Mammary epithelial cell (primary cell): ENCODE measurements at regions of chr12 and their contacts with region 1.

Region 1: GRCh38 chr12:54032627-54033100 is at the start of gene HOXC5:
- DNase-seq: peak; percentile 53
- H3K4me3 ChIP-seq: peak within 1 kb of the TSS; percentile 47 to 60 (median 54)
- H3K27ac ChIP-seq: peak within 1 kb of the TSS; percentile 33
- H3K4me1 ChIP-seq: peaks cover 30% of the 10 kb centered on the region
- H3K27me3 ChIP-seq: no peaks in the 10 kb centered on the region
- CTCF ChIP-seq: peak; percentile 94 to 95
- total RNA-seq, gene HOXC5: 0.67 to 1.4 TPM

Region 2: GRCh38 chr12:54126696-54127537 is 94.3 kb after region 1 on chr12:
- CTCF ChIA-PET with region 1: interaction called, 8 read pairs
- dilution Hi-C with region 1: no loop called
- in situ Hi-C with region 1: no loop called
- intact Hi-C with region 1: loop called (anchors 1 kb)
- DNase-seq: peak; percentile 36
- H3K4me3 ChIP-seq: peak overlapping the region; percentile 59 to 73 (median 63)
- H3K27ac ChIP-seq: no peak overlapping the region
- H3K4me1 ChIP-seq: peaks cover 9% of the 10 kb centered on the region
- H3K27me3 ChIP-seq: no peaks in the 10 kb centered on the region
- CTCF ChIP-seq: no peak

Region 3: DNA sequence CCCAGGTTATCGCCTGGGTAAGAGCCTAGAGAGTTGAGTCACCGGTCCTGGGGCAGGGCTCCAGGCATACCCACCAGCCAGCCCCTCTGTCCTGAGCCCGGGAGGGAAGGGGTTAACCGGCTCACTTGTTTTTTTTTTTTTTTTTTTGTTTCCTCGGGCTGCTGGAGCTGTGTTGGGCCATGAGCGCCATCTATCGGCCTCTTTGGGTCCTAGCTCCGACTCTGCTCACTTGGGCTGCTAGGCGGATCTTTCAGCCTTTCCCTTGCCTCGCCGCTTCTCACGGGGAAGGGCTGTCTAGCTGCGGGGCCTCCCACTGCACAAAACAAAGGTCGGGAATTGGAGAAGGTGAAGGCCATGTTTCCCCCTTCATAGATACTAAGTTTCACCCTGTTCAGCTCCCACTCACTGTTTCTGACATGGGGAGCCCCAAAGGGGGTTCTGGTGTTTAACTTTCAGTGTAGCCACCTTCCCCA is 158.9 kb after region 1 on chr12:
- CTCF ChIA-PET with region 1: interaction called, 10 read pairs
- dilution Hi-C with region 1: no loop called
- in situ Hi-C with region 1: no loop called
- intact Hi-C with region 1: loop called (anchors 1 kb)
- DNase-seq: peak; percentile 61
- H3K4me3 ChIP-seq: no peak overlapping the region
- H3K27ac ChIP-seq: no peak overlapping the region
- H3K4me1 ChIP-seq: peaks cover 12% of the 10 kb centered on the region
- H3K27me3 ChIP-seq: no peaks in the 10 kb centered on the region
- CTCF ChIP-seq: peak; percentile 84 to 90

Region 4: DNA sequence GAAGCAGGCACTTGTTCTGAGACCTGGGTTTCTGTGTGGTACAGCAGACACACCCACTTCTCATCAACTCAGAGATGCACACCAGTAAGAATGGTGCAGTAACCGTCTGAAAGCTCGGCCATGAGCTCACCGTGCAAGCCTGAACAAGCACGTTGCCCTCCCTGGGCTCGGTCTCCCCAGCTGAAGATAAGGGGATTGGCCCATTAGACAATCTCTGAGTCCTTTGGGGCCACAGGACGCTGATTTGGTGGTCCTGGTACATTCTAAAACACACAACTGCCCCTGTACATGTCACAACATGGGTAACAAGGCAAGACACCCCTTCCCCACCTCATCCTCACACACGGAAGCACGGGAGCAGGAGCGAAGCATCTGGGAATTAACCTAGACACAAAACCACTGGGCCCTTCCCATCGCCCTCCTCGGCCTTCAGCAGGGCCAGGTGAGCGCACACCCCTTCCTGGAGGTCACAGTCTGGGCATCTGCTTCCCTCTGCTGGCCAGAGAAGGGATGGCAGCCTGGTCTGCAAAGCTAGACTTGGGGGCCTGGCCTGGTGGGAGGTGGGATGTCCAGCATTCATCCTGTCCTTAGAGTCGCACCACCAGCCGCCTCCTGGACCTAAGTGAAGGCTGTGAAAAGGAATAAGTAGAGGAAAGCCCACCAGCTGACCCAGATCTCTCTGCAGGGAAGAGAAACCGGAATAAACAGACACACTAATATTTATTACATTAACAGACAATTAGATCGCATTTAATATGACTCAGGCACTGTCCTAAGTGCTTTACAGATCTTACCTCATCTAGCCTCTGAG is 175.0 kb after region 1 on chr12:
- CTCF ChIA-PET with region 1: interaction called, 18 read pairs
- dilution Hi-C with region 1: no loop called
- in situ Hi-C with region 1: no loop called
- intact Hi-C with region 1: no loop called
- DNase-seq: peak; percentile 81
- H3K4me3 ChIP-seq: no peak overlapping the region
- H3K27ac ChIP-seq: no peak overlapping the region
- H3K4me1 ChIP-seq: peaks cover 13% of the 10 kb centered on the region
- H3K27me3 ChIP-seq: no peaks in the 10 kb centered on the region
- CTCF ChIP-seq: peak; percentile 97 to 99

Region 5: GRCh38 chr12:54368709-54369583 is 336.3 kb after region 1 on chr12:
- CTCF ChIA-PET with region 1: no interaction called
- dilution Hi-C with region 1: no loop called
- in situ Hi-C with region 1: no loop called
- intact Hi-C with region 1: loop called (anchors 2 kb)
- DNase-seq: peak; percentile 65
- H3K4me3 ChIP-seq: no peak overlapping the region
- H3K27ac ChIP-seq: no peak overlapping the region
- H3K4me1 ChIP-seq: peaks cover 32% of the 10 kb centered on the region
- H3K27me3 ChIP-seq: no peaks in the 10 kb centered on the region
- CTCF ChIP-seq: peak; percentile 87 to 89